Posterior cingulate gyrus (tissue), 11 donors: ENCODE measurements at regions of chr6 and their contacts with region 1.

Region 1: DNA sequence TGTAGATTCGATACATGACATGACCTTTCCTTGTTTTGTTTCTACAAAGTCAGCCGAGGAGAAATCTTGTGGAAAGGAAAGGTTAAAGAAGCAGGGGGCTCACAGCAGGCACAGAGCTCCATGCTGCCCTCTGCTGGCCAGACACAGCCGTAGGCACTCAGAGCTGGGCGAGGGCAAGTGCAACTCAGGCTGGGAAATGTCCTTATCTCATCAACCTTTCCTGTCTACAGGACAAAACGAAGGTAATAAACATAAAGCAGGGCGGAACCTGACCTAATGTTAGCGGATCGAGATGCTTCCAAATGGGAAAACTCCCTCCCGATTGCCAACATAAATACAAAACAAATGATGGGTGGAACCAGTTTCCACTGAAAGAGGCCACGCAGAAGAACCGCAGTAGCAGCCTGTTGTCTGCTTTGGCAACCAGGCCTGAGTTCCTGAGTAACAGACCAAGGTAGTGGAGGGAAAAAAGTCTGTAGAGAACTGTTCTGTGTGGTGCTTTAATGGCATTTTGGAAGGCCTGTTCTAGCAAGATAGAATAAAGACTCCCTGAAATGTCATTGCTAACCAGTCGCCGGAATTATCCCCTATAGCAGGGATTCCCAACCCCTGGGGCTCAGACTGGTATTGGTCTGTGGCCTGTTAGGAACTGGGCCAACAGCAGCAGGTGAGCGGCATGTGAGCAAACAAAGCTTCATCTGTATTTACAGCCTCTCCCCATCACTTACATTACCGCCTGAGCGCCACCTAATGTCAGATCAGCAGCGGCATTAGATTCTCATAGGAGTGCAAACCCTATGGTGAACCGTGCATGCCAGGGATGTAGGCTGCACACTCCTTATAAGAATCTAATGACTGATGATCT is 85.2 kb downstream of the MBOAT1 start:
- DNase-seq: peak; percentile 14 to 89 (median 68)

Region 2: GRCh38 chr6:20092071-20092566 is 34.9 kb before region 1 on chr6:
- intact Hi-C with region 1: loop called (anchors 2 kb)
- DNase-seq: no peak

Region 3: GRCh38 chr6:20302702-20303251 is 175.8 kb after region 1 on chr6:
- intact Hi-C with region 1: no loop called
- DNase-seq: no peak